ENCODE measurements at regions of chr16 and their contacts with region 1.

Region 1: DNA sequence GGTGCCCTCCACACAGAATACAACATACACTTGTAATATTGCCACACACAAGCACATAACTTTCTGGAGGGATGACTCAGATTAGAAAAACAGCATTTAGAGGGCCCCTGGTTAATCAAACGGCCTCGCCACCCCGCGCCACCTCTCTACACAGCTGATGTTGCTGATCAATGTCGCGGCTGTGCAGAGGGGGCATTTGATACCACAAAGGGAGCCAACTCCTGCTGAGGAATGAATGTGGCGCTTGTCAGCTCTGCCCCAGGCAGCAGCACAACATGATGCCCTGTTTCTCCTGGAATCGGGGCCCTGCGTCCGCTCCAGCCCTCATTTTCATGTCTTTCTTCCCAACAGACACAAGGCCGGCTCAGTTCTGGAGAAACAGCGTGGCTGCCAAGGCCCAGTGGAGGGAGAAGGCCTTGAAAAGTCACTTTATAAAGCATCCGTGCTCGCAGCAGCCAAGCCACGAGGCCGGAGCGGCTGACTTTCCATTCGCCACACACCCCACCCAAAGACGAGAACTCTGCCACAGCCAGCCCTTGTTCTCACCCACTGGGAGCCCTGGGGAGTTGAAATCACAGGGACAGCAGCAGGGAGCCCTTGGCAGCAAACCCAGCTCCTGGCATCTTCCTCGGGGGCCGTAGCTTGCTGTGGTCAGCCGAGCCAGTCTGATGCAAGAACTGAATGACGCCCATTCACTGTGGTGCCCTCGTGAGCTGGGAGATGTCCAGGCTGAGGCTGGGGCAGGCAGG is 65.6 kb downstream of the XYLT1 start:
- DNase-seq: peak; percentile 97
- H3K4me3 ChIP-seq: no peak overlapping the region
- H3K27ac ChIP-seq: peak overlapping the region; percentile 85 to 97 (median 92)
- H3K4me1 ChIP-seq: peaks cover 0 to 64% (median 52%) of the 10 kb centered on the region in 4 donors
- H3K27me3 ChIP-seq: no peaks in the 10 kb centered on the region
- CTCF ChIP-seq: no peak
- EP300 ChIP-seq: peak; percentile 62 to 93 (median 92)
- POLR2A ChIP-seq: no peak

Region 2: DNA sequence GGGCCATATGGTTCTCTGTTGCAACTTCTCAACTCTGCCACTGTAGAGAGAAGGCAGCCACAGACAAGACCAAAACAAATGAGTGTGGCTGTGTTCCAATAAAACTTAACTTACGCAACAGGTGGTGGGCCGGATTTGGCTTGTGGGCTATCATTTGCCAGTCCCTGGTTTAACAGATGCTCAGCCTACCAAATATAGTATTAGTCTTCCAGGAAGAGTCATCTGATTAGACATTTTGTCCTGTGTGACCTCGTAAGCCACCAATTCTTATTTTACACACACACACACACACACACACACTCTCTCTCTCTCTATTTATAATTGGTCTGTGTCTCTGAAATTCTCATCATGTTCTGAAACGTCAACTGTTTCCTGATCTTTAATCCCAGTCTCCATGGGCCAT is 180.2 kb before region 1 on chr16:
- intact Hi-C with region 1: loop called (anchors 5 kb)
- DNase-seq: peak; percentile 89
- H3K4me3 ChIP-seq: no peak overlapping the region
- H3K27ac ChIP-seq: peak overlapping the region; percentile 76 to 88 (median 84)
- H3K4me1 ChIP-seq: peaks cover 0 to 50% (median 47%) of the 10 kb centered on the region in 4 donors
- H3K27me3 ChIP-seq: no peaks in the 10 kb centered on the region
- CTCF ChIP-seq: no peak
- EP300 ChIP-seq: peak; percentile 62 to 89 (median 70)
- POLR2A ChIP-seq: no peak

Region 3: DNA sequence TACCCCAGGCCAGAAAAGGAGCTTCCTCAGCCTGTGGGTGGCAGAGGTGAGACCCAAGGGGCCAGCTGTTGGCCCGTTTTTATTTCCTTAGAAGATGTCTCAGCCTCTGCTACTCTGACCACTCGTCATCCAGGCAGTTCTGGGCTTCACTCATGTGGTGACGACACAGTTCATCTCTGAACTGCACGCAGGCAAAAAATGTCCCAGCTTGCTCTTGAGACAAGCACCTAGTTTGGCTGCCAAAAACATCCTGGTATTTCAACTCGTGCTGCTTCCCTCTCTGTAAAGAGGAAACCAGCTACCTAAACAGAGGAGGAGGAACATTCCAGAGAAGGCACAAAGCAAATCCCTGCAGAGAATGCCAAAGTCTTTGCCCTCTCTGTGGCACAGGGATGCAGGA is 60.1 kb before region 1 on chr16:
- intact Hi-C with region 1: loop called (anchors 2 kb)
- DNase-seq: peak; percentile 96
- H3K4me3 ChIP-seq: no peak overlapping the region
- H3K27ac ChIP-seq: peak overlapping the region; percentile 82 to 92 (median 88)
- H3K4me1 ChIP-seq: peaks cover 0 to 78% (median 75%) of the 10 kb centered on the region in 4 donors
- H3K27me3 ChIP-seq: no peaks in the 10 kb centered on the region
- CTCF ChIP-seq: no peak
- EP300 ChIP-seq: peak; percentile 82 to 99 (median 88)
- POLR2A ChIP-seq: no peak